Heart right ventricle (tissue), 16 donors: ENCODE measurements at regions of chr21 and their contacts with region 1.

Region 1: DNA sequence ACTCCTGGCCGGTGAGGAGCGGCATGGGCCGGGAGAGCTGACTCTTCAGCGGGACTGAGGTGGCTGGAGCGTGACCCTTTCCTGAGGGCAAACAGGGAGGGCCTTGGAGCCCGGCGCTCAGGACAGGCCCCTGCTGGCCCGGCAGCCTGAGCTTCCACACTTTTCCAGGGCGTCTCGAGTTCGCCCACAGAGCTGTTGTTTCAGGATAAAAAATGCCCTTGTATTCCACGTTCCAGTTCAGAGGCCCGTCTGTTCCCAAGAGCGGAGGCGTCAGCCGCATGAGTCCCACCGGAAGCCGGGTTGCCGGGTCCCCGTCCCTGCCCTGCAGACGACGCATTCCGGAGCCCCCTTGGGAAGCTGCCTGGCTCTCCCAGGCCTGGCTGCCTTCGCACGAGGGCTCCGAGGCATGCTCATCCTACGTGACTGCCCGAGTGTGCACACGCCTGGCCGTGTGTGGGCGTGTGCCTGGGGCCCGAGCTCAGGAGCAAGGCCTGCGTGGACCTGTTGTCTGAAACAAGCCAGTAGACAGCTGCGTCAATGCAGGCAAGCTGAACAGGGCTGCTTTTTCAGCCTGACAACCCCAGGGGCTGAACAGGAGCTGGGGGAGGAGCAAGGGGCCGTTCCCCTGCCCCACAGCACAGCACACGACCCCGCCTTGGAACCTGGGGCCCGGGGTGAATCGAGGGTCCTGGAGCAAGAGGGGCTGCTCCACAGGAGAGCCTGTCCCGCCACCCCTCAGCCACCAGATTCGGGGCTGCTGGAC is 125.9 kb downstream of the SIK1 start:
- DNase-seq: peak; percentile 65 to 74
- ATAC-seq: peak; percentile 23 to 72 (median 66)
- H3K4me3 ChIP-seq: no peak overlapping the region
- H3K27ac ChIP-seq: peak overlapping the region in 6 of 10 donors; percentile 1 to 64 (median 48)
- H3K4me1 ChIP-seq: peaks cover 0 to 20% (median 8%) of the 10 kb centered on the region in 9 donors
- H3K27me3 ChIP-seq: no peaks in the 10 kb centered on the region
- CTCF ChIP-seq: no peak

Region 2: DNA sequence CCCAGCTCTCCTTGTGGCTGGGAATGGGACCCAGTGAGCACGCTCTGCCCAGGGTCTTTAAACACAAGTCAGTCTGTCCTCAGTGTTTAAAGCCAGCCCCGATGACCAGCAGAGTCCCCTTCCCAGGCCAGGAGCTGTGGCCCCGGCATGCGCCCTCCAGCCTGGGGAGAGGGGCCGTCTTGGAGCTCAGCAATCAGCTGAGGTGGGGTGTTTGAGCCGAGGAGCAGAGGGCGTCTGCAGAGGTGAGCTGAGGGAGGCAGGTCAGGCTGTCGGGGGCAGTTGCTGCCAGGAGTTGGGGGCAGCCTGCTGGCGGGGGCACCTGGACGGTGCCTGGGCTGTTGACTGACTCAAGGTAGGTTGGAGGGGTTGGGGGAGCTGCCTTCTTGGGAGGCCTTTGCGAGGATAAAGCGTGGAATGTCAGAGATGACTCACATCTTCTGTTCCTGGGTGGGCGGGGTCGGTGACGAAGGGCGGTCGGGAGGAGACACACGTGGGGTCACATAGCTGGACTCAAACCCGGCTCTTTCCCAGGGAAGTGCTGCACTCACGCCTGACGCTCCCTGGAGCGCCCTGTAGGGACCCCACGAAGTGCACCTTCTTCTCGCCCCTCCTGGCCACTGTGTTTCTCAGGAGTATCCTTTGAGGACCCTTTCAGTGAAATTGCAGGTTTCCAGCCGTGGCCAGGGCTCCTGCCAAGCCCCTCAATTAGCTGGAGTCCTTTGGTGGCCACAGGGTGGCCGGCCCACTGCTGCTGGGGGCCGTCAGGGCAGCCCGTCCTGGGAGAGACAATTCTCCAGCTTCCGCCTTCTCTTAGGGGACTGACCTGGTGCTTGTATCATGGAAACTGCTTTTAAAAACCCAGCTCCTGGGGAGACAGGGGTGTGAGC is 39.7 kb after region 1 on chr21:
- intact Hi-C with region 1: loop called in 2 of 10 experiments (anchors 5 kb)
- DNase-seq: no peak
- ATAC-seq: peak in 4 of 8 donors; percentile 14 to 50 (median 33)
- H3K4me3 ChIP-seq: no peak overlapping the region
- H3K27ac ChIP-seq: peak overlapping the region in 2 of 10 donors; percentile 11 to 35
- H3K4me1 ChIP-seq: peaks cover 0 to 34% (median 19%) of the 10 kb centered on the region in 9 donors
- H3K27me3 ChIP-seq: no peaks in the 10 kb centered on the region
- CTCF ChIP-seq: no peak

Region 3: DNA sequence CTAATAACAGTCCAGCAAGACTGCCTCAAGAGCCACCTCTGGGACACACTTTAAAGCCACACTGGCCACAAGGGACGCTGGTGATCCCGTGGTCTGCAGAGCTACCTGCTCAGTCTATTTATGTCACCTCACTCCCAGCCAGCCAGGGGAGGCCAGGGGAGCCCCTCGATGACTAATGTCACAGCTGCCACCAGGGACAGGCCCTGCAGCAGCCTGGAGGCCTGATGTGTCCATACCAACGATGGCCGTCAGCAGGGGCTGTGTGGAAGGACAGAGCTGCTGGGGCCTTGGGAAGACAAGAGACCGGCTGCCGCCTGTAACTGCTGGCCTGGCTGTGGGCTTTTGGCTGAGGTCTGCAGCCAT is 54.9 kb after region 1 on chr21:
- intact Hi-C with region 1: loop called in 1 of 10 experiments (anchors 5 kb)
- DNase-seq: peak in 1 of 2 donors; percentile 6
- ATAC-seq: peak in 3 of 8 donors; percentile 11 to 35 (median 23)
- H3K4me3 ChIP-seq: no peak overlapping the region
- H3K27ac ChIP-seq: no peak overlapping the region
- H3K4me1 ChIP-seq: peaks cover 0 to 7% (median 4%) of the 10 kb centered on the region in 9 donors
- H3K27me3 ChIP-seq: no peaks in the 10 kb centered on the region
- CTCF ChIP-seq: no peak